ENCODE measurements at regions of chr17 and their contacts with region 1.

Region 1: DNA sequence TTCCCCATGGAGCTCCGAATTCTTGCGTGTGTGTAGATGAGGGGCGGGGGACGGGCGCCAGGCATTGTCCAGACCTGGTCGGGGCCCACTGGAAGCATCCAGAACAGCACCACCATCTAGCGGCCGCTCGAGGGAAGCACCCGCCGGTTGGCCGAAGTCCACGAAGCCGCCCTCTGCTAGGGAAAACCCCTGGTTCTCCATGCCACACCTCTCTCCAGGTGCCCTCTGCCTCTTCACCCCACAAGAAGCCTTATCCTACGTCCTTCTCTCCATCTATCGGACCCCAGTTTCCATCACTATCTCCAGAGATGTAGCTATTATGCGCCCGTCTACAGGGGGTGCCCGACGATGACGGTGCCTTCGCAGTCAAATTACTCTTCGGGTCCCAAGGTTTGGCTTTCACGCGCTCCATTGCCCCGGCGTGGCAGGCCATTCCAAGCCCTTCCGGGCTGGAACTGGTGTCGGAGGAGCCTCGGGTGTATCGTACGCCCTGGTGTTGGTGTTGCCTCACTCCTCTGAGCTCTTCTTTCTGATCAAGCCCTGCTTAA is 617 bp upstream of the SENP3 start:
- DNase-seq: peak; percentile 91 to 98
- ATAC-seq: peak; percentile 81 to 86
- H3K4me3 ChIP-seq: peak overlapping the region; percentile 77
- H3K27ac ChIP-seq: peak overlapping the region; percentile 90 to 97
- H3K4me1 ChIP-seq: peaks cover 45% of the 10 kb centered on the region
- CTCF ChIP-seq: peak; percentile 83
- EP300 ChIP-seq: no peak
- POLR2A ChIP-seq: 0 out of 2 replicates have a peak, but pooled peaks have one; percentile 11
- RAD21 ChIP-seq: peak; percentile 89 to 93

Region 2: GRCh38 chr17:7351665-7352501 is 209.2 kb before region 1 on chr17 and contains the start of gene KCTD11:
- CTCF ChIA-PET with region 1: interaction called, 92 read pairs
- POLR2A ChIA-PET with region 1: interaction called, 3 read pairs
- DNase-seq: peak; percentile 91 to 96
- ATAC-seq: peak; percentile 57 to 79
- H3K4me3 ChIP-seq: peak within 1 kb of the TSS; percentile 70
- H3K27ac ChIP-seq: peak within 1 kb of the TSS; percentile 92 to 96
- H3K4me1 ChIP-seq: peaks cover 52% of the 10 kb centered on the region
- CTCF ChIP-seq: peak; percentile 60
- EP300 ChIP-seq: peak in 1 of 2 experiments; percentile 39; a peak in 1 of 5 replicates
- POLR2A ChIP-seq: peak; percentile 69
- RAD21 ChIP-seq: no peak
- polyA plus RNA-seq, gene KCTD11: 6.1 and 7.0 TPM in 2 replicates

Region 3: DNA sequence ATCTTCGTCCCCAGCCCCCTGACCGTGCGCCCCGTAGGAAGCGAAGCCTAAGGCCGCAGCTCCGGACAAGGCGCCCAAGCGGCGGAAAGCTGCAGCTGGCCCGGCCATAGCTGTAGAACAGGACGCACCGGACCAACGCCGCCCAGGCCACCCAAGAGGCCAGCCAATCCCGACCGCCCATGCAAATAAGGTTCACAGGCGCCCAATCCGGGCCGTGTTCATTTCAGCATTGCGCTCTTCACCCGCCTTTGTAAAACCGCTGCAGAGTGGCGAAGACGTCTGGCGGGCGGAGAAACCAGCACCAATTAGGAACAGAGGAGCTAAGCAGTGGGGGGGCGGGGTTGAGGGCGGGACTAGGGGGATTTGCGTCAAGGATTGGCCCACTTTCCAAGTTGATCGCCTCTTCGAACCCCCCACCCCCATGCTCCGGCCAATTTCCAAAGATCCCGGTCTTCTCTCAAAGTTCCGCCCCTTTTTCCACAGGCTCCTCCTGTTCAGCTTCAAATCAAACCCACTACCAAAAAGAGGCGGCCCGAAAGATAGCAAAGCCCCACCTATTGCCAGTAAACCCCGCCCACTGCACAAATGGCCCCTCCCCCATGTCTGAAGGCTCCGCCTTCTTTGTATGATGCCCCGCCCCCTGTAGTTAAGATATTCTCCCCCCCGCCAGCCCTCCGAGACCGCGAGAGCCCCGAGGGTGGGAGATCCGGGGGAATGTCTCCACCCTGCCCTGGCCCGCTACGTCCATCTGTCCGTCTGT is 156.9 kb before region 1 on chr17 and contains the start of gene TMEM256:
- CTCF ChIA-PET with region 1: interaction called, 12 read pairs
- POLR2A ChIA-PET with region 1: interaction called, 3 read pairs
- DNase-seq: peak; percentile 98 to 100
- ATAC-seq: peak; percentile 85 to 97
- H3K4me3 ChIP-seq: peak within 1 kb of the TSS; percentile 88
- H3K27ac ChIP-seq: peak within 1 kb of the TSS; percentile 81 to 92
- H3K4me1 ChIP-seq: peaks cover 28% of the 10 kb centered on the region
- CTCF ChIP-seq: no peak
- EP300 ChIP-seq: no peak
- POLR2A ChIP-seq: peak; percentile 88
- RAD21 ChIP-seq: no peak
- polyA plus RNA-seq, gene TMEM256: 127 and 210 TPM in 2 replicates

Region 4: GRCh38 chr17:7466639-7467341 is 94.3 kb before region 1 on chr17:
- CTCF ChIA-PET with region 1: interaction called, 20 read pairs
- POLR2A ChIA-PET with region 1: no interaction called
- DNase-seq: no peak
- ATAC-seq: peak; percentile 37 to 39; a peak in 4 of 6 replicates
- H3K4me3 ChIP-seq: no peak overlapping the region
- H3K27ac ChIP-seq: peak overlapping the region in 1 of 2 experiments; percentile 57; a peak in 3 of 6 replicates
- H3K4me1 ChIP-seq: peaks cover 24% of the 10 kb centered on the region
- CTCF ChIP-seq: no peak
- EP300 ChIP-seq: no peak
- POLR2A ChIP-seq: no peak
- RAD21 ChIP-seq: no peak

Region 5: DNA sequence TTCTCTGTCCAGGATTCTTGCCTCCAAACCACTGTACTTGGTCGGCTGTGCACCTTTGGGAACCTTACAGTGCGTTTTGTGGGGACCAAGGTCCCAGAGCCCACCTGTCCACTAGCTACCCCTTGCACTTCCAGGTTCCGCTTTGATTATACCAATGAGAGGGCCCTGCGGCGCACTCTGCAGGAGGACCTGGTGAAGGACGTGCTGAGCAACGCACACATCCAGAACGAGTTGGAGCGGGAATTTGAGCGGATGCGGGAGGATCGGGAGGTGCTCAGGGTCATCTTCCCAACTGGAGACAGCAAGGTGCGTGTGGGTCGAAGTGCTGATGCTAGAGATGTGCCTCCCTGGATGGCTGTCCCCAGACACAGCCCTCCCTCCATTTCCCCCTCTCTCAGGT is 58.1 kb before region 1 on chr17:
- CTCF ChIA-PET with region 1: interaction called, 37 read pairs
- POLR2A ChIA-PET with region 1: no interaction called
- DNase-seq: peak in 1 of 2 experiments; percentile 37
- ATAC-seq: peak; percentile 62 to 72
- H3K4me3 ChIP-seq: no peak overlapping the region
- H3K27ac ChIP-seq: no peak overlapping the region
- H3K4me1 ChIP-seq: no peaks in the 10 kb centered on the region
- CTCF ChIP-seq: peak; percentile 31; the same call in 2 of the 3 replicates
- EP300 ChIP-seq: no peak
- POLR2A ChIP-seq: no peak
- RAD21 ChIP-seq: peak; percentile 34 to 54; a peak in 4 of 5 replicates

Region 6: DNA sequence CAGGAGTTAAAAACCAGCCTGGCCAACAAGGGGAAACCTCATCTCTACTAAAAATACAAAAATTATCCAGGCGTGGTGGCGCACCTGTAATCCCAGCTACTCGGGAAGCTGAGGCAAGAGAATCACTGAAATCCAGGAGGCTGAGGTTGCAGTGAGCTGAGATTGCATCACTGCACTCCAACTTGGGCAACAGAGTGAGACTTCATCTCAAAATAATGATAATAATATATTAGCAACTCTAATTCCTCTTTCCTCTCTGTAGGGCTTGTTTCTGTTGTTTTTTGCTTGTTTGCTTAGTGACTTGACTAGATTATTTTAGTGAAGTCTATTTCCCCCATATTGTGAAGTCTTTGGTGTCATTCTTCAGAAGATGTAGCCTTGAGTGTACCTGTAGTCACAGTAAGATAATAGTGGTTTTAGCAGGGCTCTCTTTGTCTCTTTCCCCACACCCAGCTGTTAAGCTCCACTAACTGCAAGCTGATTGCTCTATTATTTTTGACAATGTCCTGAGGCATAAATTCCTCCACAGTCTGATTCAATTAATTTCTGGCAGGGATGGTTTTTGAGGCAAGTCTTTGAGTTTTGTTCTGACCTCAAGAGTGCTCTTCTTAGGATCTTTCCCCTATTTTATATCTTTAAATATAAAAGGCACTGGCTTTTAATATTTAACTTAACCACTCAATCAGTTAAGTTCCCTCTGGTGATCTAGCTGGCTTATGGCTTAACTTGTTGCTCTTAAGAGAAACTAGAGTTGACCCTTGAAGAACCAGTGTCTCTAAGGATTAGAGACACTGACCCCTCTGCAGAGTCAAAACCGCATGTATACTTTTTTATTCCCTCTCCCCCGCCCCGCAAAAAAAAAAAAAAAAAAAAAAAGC is 30.8 kb before region 1 on chr17:
- CTCF ChIA-PET with region 1: interaction called, 30 read pairs
- POLR2A ChIA-PET with region 1: no interaction called
- DNase-seq: no peak
- ATAC-seq: no peak
- H3K4me3 ChIP-seq: no peak overlapping the region
- H3K27ac ChIP-seq: no peak overlapping the region
- H3K4me1 ChIP-seq: 0 out of 3 replicates have a peak, but pooled peaks cover 3% of the 10 kb centered on the region
- CTCF ChIP-seq: no peak
- EP300 ChIP-seq: no peak
- POLR2A ChIP-seq: no peak
- RAD21 ChIP-seq: no peak

Region 7: GRCh38 chr17:7583253-7584109 is 22.4 kb after region 1 on chr17 and contains the start of gene MPDU1:
- CTCF ChIA-PET with region 1: interaction called, 10 read pairs
- POLR2A ChIA-PET with region 1: interaction called, 5 read pairs
- DNase-seq: peak; percentile 89 to 97
- ATAC-seq: peak; percentile 35 to 68
- H3K4me3 ChIP-seq: peak within 1 kb of the TSS; percentile 66
- H3K27ac ChIP-seq: peak within 1 kb of the TSS; percentile 91 to 96
- H3K4me1 ChIP-seq: peaks cover 50% of the 10 kb centered on the region
- CTCF ChIP-seq: no peak
- EP300 ChIP-seq: no peak
- POLR2A ChIP-seq: peak; percentile 74
- RAD21 ChIP-seq: no peak
- polyA plus RNA-seq, gene MPDU1: 148 and 204 TPM in 2 replicates

Measured in A549 (cell line).